Endothelial cell of umbilical vein (primary cell): ENCODE measurements at regions of chr21 and their contacts with region 1.

Region 1: GRCh38 chr21:18041012-18041411 is 203.6 kb upstream of the CHODL start:
- DNase-seq: peak; percentile 59
- H3K4me3 ChIP-seq: no peak overlapping the region
- H3K27ac ChIP-seq: no peak overlapping the region
- H3K4me1 ChIP-seq: no peaks in the 10 kb centered on the region
- H3K27me3 ChIP-seq: no peaks in the 10 kb centered on the region
- CTCF ChIP-seq: peak; percentile 40 to 56
- POLR2A ChIP-seq: no peak

Region 2: DNA sequence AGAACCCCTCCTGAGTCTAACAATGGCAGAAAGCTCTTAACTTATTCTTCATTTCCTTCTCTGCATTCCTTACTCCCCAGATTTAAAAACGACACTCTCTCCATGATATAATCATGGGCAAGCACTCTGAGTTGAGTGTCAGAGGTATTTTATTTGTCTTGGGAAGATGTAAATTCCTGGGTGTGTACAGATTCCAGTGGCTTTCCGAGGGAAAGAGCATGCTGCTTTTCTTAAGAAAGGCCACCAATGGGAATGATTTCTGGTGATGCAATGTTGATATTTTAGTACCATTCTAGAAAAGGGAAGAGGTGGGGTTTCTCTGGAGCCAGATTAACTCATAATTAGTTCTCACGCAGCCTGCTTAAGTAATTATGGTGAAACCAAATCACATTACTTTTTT is 380.6 kb before region 1 on chr21:
- CTCF ChIA-PET with region 1: no interaction called
- POLR2A ChIA-PET with region 1: no interaction called
- dilution Hi-C with region 1: no loop called
- intact Hi-C with region 1: no loop called
- DNase-seq: no peak
- H3K4me3 ChIP-seq: no peak overlapping the region
- H3K27ac ChIP-seq: no peak overlapping the region
- H3K4me1 ChIP-seq: no peaks in the 10 kb centered on the region
- H3K27me3 ChIP-seq: no peaks in the 10 kb centered on the region
- CTCF ChIP-seq: no peak
- POLR2A ChIP-seq: no peak

Region 3: GRCh38 chr21:18053151-18053550 is 12.1 kb after region 1 on chr21:
- CTCF ChIA-PET with region 1: interaction called, 11 read pairs
- POLR2A ChIA-PET with region 1: no interaction called
- dilution Hi-C with region 1: no loop called
- intact Hi-C with region 1: no loop called
- DNase-seq: no peak
- H3K4me3 ChIP-seq: no peak overlapping the region
- H3K27ac ChIP-seq: no peak overlapping the region
- H3K4me1 ChIP-seq: no peaks in the 10 kb centered on the region
- H3K27me3 ChIP-seq: no peaks in the 10 kb centered on the region
- CTCF ChIP-seq: no peak
- POLR2A ChIP-seq: no peak

Region 4: GRCh38 chr21:18104802-18105201 is 63.8 kb after region 1 on chr21:
- CTCF ChIA-PET with region 1: no interaction called
- POLR2A ChIA-PET with region 1: no interaction called
- dilution Hi-C with region 1: no loop called
- intact Hi-C with region 1: no loop called
- DNase-seq: no peak
- H3K4me3 ChIP-seq: no peak overlapping the region
- H3K27ac ChIP-seq: no peak overlapping the region
- H3K4me1 ChIP-seq: no peaks in the 10 kb centered on the region
- H3K27me3 ChIP-seq: no peaks in the 10 kb centered on the region
- CTCF ChIP-seq: no peak
- POLR2A ChIP-seq: no peak

Region 5: GRCh38 chr21:18252680-18253079 is 211.7 kb after region 1 on chr21:
- CTCF ChIA-PET with region 1: interaction called, 10 read pairs
- POLR2A ChIA-PET with region 1: no interaction called
- dilution Hi-C with region 1: no loop called
- intact Hi-C with region 1: no loop called
- DNase-seq: no peak
- H3K4me3 ChIP-seq: no peak overlapping the region
- H3K27ac ChIP-seq: no peak overlapping the region
- H3K4me1 ChIP-seq: no peaks in the 10 kb centered on the region
- H3K27me3 ChIP-seq: no peaks in the 10 kb centered on the region
- CTCF ChIP-seq: no peak
- POLR2A ChIP-seq: no peak

Region 6: DNA sequence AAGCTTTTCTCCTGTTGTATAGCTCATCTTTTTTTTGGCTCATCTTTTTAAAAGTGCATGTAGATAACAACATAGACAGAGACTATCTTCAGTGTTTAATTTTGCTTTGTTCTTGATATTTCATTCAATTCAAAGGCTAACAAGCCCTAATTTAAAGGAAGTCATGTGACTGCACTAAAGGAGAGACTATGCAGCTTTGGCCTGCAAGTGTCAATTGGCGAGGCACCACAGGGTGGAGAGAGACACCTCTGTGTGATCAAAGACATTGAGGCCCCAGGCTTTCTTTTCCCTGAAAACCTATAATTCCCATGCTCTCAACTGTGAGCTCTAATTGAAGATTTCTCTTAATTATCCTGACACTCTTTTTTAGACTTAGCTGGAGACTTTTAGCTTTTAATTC is 257.2 kb after region 1 on chr21:
- CTCF ChIA-PET with region 1: interaction called, 9 read pairs
- POLR2A ChIA-PET with region 1: no interaction called
- dilution Hi-C with region 1: no loop called
- intact Hi-C with region 1: loop called (anchors 2 kb)
- DNase-seq: no peak
- H3K4me3 ChIP-seq: no peak overlapping the region
- H3K27ac ChIP-seq: no peak overlapping the region
- H3K4me1 ChIP-seq: no peaks in the 10 kb centered on the region
- H3K27me3 ChIP-seq: no peaks in the 10 kb centered on the region
- CTCF ChIP-seq: no peak
- POLR2A ChIP-seq: no peak